ENCODE measurements at regions of chr22 and their contacts with region 1.

Region 1: DNA sequence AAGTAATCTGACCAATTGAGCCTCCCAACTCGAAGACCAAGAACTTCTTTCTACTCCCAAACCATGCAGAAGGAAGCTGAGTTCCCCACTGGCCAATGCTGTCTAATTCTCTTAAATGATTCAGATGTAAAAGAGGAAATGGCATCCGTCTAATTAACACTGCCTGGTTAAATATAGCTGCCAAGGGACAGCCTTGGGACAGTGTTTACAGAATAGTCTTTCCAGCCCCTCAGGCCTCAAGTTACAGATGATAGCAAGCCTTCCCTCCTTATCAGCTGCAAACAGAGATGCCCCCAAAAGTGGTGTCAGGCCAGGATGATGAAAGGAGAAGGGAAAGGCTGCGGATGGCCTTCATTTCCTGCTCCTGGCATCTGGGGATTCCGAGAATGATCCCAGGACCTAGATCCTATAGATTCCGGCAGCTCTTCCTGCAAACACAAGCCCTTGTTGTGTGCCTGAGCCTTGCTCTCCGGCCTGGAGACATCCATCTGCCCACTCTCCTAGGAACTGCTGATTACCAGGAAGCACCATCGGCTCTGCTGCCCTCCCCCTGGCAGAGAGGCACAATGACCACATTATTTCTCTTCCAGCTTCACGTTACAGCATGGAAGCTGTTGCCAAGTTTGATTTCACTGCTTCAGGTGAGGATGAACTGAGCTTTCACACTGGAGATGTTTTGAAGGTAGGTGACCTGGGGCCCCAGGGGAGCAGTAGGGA is 13.5 kb upstream of the TMA7B start:
- DNase-seq: no peak
- H3K4me3 ChIP-seq: no peak overlapping the region
- H3K27ac ChIP-seq: no peak overlapping the region
- H3K4me1 ChIP-seq: peaks cover 8 to 22% (median 11%) of the 10 kb centered on the region in 4 experiments; a peak in 5 of 7 replicates
- H3K27me3 ChIP-seq: no peaks in the 10 kb centered on the region; a peak in 1 of 7 replicates
- CTCF ChIP-seq: no peak
- EP300 ChIP-seq: no peak
- POLR2A ChIP-seq: no peak
- RAD21 ChIP-seq: no peak

Region 2: DNA sequence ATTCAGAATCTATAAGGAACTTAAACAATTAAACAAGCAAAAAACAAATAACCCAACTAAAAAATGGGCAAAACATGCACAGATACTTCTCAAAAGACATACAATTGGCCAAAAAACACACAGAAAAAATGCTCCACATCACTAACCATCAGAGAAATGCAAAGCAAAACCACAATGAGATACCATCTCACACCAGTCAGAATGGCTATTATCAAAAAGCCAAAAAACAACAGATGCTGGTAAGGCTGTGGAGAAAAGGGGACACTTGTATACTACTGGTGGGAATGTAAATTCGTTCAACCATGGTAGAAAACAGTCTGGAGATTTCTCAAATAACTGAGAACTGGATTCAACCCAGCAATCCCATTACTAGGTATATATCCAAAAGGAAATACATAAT is 77.9 kb before region 1 on chr22:
- CTCF ChIA-PET with region 1: no interaction called
- POLR2A ChIA-PET with region 1: no interaction called
- DNase-seq: no peak
- H3K4me3 ChIP-seq: no peak overlapping the region
- H3K27ac ChIP-seq: no peak overlapping the region
- H3K4me1 ChIP-seq: no peaks in the 10 kb centered on the region
- H3K27me3 ChIP-seq: no peaks in the 10 kb centered on the region
- CTCF ChIP-seq: no peak
- EP300 ChIP-seq: no peak
- POLR2A ChIP-seq: no peak
- RAD21 ChIP-seq: no peak

Region 3: GRCh38 chr22:39908737-39909136 is 37.9 kb before region 1 on chr22:
- CTCF ChIA-PET with region 1: no interaction called
- POLR2A ChIA-PET with region 1: no interaction called
- DNase-seq: no peak
- H3K4me3 ChIP-seq: no peak overlapping the region
- H3K27ac ChIP-seq: no peak overlapping the region
- H3K4me1 ChIP-seq: no peaks in the 10 kb centered on the region
- H3K27me3 ChIP-seq: peaks cover 0 to 1% (median 0%) of the 10 kb centered on the region in 4 experiments; a peak in 1 of 7 replicates
- CTCF ChIP-seq: no peak
- EP300 ChIP-seq: no peak
- POLR2A ChIP-seq: no peak
- RAD21 ChIP-seq: no peak

Region 4: GRCh38 chr22:39960791-39961746 is 14.4 kb after region 1 on chr22:
- CTCF ChIA-PET with region 1: interaction called, 66 read pairs
- POLR2A ChIA-PET with region 1: interaction called, 3 read pairs
- DNase-seq: no peak
- H3K4me3 ChIP-seq: no peak overlapping the region
- H3K27ac ChIP-seq: no peak overlapping the region
- H3K4me1 ChIP-seq: peaks cover 0 to 6% (median 3%) of the 10 kb centered on the region in 4 experiments; a peak in 4 of 7 replicates
- H3K27me3 ChIP-seq: peaks cover 0 to 7% (median 0%) of the 10 kb centered on the region in 4 experiments; a peak in 3 of 7 replicates
- CTCF ChIP-seq: no peak
- EP300 ChIP-seq: no peak
- POLR2A ChIP-seq: no peak
- RAD21 ChIP-seq: no peak

Region 5: GRCh38 chr22:39997939-39998338 is 51.3 kb after region 1 on chr22:
- CTCF ChIA-PET with region 1: interaction called, 10 read pairs
- POLR2A ChIA-PET with region 1: no interaction called
- DNase-seq: peak in 1 of 2 experiments; percentile 59
- H3K4me3 ChIP-seq: peak overlapping the region in 3 of 4 experiments; percentile 7 to 30 (median 17); a peak in 4 of 8 replicates
- H3K27ac ChIP-seq: peak overlapping the region; percentile 2; the same call in 1 of the 2 replicates
- H3K4me1 ChIP-seq: peaks cover 26 to 59% (median 46%) of the 10 kb centered on the region in 4 experiments
- H3K27me3 ChIP-seq: peaks cover 0 to 19% (median 13%) of the 10 kb centered on the region in 4 experiments; a peak in 6 of 7 replicates
- CTCF ChIP-seq: no peak
- EP300 ChIP-seq: no peak
- POLR2A ChIP-seq: no peak
- RAD21 ChIP-seq: no peak

Region 6: GRCh38 chr22:40009292-40009769 is 62.7 kb after region 1 on chr22:
- CTCF ChIA-PET with region 1: interaction called, 10 read pairs
- POLR2A ChIA-PET with region 1: no interaction called
- DNase-seq: peak in 1 of 2 experiments; percentile 74
- H3K4me3 ChIP-seq: peak overlapping the region in 2 of 4 experiments; percentile 12 to 17; a peak in 3 of 8 replicates
- H3K27ac ChIP-seq: no peak overlapping the region
- H3K4me1 ChIP-seq: peaks cover 14 to 25% (median 18%) of the 10 kb centered on the region in 4 experiments
- H3K27me3 ChIP-seq: no peaks in the 10 kb centered on the region
- CTCF ChIP-seq: no peak
- EP300 ChIP-seq: no peak
- POLR2A ChIP-seq: no peak
- RAD21 ChIP-seq: no peak

Measured in H1 (cell line).